T-cell (primary cell): ENCODE measurements at regions of chr6 and their contacts with region 1.

Region 1: DNA sequence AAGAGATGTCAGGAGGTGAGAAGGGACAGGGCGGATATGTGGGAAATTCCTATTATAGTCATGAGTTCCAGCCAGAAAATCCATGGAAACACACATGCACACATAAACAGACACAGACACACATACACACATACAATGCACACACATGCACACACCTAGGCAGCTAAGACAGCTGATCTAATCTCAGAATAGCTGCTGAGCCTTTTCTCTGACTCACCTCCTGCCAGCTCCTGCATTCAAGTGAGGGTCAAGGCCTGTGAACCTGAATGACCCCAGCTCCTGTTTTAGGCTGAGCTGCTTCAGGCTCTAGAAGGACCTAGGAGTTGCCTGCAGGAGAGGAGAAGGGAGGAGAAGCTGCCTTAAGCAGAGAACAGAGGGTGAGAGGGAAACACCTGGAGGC is 21.6 kb upstream of the RAET1L start:
- DNase-seq: no peak
- ATAC-seq: no peak
- H3K4me3 ChIP-seq: no peak overlapping the region
- H3K4me3 Mint-ChIP-seq: no peak overlapping the region
- H3K27ac ChIP-seq: no peak overlapping the region
- H3K27ac Mint-ChIP-seq: no peak overlapping the region
- H3K4me1 ChIP-seq: peaks cover 0 to 4% of the 10 kb centered on the region in 2 experiments
- H3K4me1 Mint-ChIP-seq: peaks cover 3 to 7% (median 4%) of the 10 kb centered on the region in 3 donors
- H3K27me3 ChIP-seq: peaks cover 0 to 48% of the 10 kb centered on the region in 2 experiments
- H3K27me3 Mint-ChIP-seq: peaks cover 21 to 66% of the 10 kb centered on the region in 2 donors

Region 2: GRCh38 chr6:150267686-150268561 is 221.0 kb after region 1 on chr6:
- CTCF ChIA-PET with region 1: no interaction called
- POLR2A ChIA-PET with region 1: interaction called in 1 of 2 experiments, 12 read pairs
- DNase-seq: no peak
- ATAC-seq: no peak
- H3K4me3 ChIP-seq: no peak overlapping the region
- H3K4me3 Mint-ChIP-seq: no peak overlapping the region
- H3K27ac ChIP-seq: no peak overlapping the region
- H3K27ac Mint-ChIP-seq: no peak overlapping the region
- H3K4me1 ChIP-seq: peaks cover 0 to 12% of the 10 kb centered on the region in 2 experiments
- H3K4me1 Mint-ChIP-seq: peaks cover 0 to 7% (median 6%) of the 10 kb centered on the region in 3 donors
- H3K27me3 ChIP-seq: no peaks in the 10 kb centered on the region
- H3K27me3 Mint-ChIP-seq: no peaks in the 10 kb centered on the region